ENCODE measurements at regions of chr15 and their contacts with region 1.

Region 1: DNA sequence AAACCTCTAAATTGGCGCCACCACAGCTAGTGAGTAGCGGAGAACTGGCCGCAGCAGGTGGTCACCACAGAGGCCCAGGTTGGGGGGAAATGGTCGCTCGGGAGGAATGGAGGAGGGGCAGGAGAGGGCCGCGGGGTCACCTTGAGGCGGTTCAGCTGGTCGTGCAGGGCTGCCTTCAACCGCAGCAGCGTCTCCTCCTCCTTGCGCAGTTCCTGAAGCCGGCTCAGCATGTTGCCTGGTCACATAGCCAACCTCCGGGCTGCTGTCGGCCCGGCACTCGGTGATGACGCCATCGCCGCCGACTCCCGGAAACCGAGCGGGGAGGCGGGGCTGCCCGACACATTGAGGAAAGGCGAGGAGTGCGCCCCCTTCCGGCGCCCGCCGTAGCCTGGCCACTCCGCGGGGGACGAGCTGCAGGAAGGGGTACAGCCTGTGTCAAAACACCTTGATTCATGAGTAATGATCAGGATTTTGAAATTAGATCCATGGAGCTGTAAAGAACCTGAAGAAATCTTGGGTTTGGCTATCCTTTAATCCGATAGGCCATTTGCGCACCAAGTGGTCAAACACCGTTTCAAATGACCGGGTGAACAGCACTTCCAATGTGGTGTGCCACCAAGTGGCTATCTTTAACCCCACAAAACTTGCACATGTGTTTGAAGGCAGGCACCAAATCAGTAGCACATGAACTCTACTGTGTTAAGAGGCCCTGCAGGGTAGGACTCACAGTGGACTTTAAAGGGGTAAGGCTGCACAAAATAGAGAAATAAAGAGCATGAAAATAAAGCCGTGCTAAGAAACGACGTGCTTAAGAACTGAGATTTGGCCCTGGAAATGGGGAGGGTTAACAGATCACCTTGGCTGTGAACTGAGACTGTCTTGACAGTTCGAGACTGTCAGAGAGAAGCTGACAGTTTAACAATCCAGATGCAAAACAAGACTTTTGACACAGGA is at the start of gene SNAPC5:
- DNase-seq: peak; percentile 94 to 99 (median 96)
- ATAC-seq: peak; percentile 97
- H3K4me3 ChIP-seq: peak within 1 kb of the TSS; percentile 80
- H3K4me3 Mint-ChIP-seq: peak within 1 kb of the TSS; percentile 89 to 98 (median 97)
- H3K27ac ChIP-seq: peak within 1 kb of the TSS; percentile 91
- H3K27ac Mint-ChIP-seq: peak within 1 kb of the TSS; percentile 94 to 99 (median 98)
- H3K4me1 ChIP-seq: peaks cover 18 to 28% of the 10 kb centered on the region in 2 donors
- H3K4me1 Mint-ChIP-seq: peaks cover 21 to 66% (median 49%) of the 10 kb centered on the region in 7 donors
- H3K27me3 ChIP-seq: no peaks in the 10 kb centered on the region
- H3K27me3 Mint-ChIP-seq: no peaks in the 10 kb centered on the region
- total RNA-seq, gene SNAPC5: 20.4 to 35.9 (median 25.0) TPM

Region 2: DNA sequence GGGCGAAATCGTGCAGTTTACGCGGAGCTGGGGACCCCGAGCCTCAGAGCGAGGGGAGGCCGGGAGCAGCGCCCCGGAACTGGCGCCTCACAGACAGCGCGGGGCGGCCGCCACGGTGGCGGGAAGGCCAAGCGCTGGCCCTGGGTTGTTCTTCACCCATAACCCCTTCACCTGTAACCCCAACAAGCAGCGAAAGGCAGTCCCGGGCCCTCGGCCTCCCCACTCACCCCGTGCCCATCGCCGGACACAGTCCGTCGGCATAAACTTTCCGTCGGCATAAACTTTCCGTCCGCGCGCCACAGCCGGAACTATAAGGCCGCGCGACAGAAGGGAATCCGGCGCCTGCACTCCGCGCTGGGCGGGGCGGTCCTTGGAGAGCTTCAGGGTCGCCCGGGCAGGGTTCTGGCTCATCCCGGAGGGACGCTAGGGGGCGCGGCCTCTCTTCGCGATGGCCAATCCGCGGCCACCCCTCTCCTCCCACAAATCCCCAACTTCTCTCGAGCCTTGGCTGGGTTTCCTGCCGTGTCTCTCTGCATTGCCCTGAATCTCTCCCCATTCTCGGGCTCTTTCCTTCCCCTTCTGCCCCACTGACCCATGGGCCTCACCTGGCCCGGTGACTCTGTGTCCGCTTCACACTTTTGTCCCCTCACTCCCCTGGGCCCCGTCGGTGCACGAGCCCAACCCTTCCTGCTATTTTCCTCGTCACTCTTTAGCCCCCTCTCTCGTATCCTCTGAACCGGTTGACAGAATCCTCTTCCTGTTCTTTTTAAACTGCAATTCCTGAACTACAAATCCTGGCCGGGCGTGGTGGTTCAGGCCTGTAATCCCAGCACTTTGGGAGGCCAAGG is 886.7 kb before region 1 on chr15 and contains the start of gene INTS14:
- CTCF ChIA-PET with region 1: no interaction called
- POLR2A ChIA-PET with region 1: no interaction called
- intact Hi-C with region 1: loop called in 1 of 2 experiments (anchors 1 kb)
- DNase-seq: peak; percentile 74 to 96 (median 80)
- ATAC-seq: peak; percentile 99
- H3K4me3 ChIP-seq: peak within 1 kb of the TSS; percentile 97
- H3K4me3 Mint-ChIP-seq: peak within 1 kb of the TSS; percentile 95 to 99 (median 98)
- H3K27ac ChIP-seq: peak within 1 kb of the TSS; percentile 89
- H3K27ac Mint-ChIP-seq: peak within 1 kb of the TSS; percentile 97 to 100 (median 98)
- H3K4me1 ChIP-seq: peaks cover 18 to 21% of the 10 kb centered on the region in 2 donors
- H3K4me1 Mint-ChIP-seq: peaks cover 11 to 44% (median 32%) of the 10 kb centered on the region in 7 donors
- H3K27me3 ChIP-seq: no peaks in the 10 kb centered on the region
- H3K27me3 Mint-ChIP-seq: no peaks in the 10 kb centered on the region
- total RNA-seq, gene INTS14: 19.1 to 38.3 (median 35.9) TPM

Region 3: GRCh38 chr15:66293419-66294156 is 204.2 kb before region 1 on chr15 and contains the start of gene DIS3L:
- CTCF ChIA-PET with region 1: interaction called, 9 read pairs
- POLR2A ChIA-PET with region 1: interaction called, 13 read pairs
- intact Hi-C with region 1: loop called (anchors 1 to 2 kb)
- DNase-seq: peak; percentile 55 to 80 (median 69)
- ATAC-seq: peak; percentile 85
- H3K4me3 ChIP-seq: peak within 1 kb of the TSS; percentile 69
- H3K4me3 Mint-ChIP-seq: peak within 1 kb of the TSS; percentile 82 to 93 (median 89)
- H3K27ac ChIP-seq: peak within 1 kb of the TSS; percentile 84
- H3K27ac Mint-ChIP-seq: peak within 1 kb of the TSS; percentile 86 to 97 (median 96)
- H3K4me1 ChIP-seq: peaks cover 13 to 31% of the 10 kb centered on the region in 2 donors
- H3K4me1 Mint-ChIP-seq: peaks cover 20 to 57% (median 48%) of the 10 kb centered on the region in 7 donors
- H3K27me3 ChIP-seq: no peaks in the 10 kb centered on the region
- H3K27me3 Mint-ChIP-seq: peaks cover 0 to 4% (median 0%) of the 10 kb centered on the region in 5 donors
- total RNA-seq, gene DIS3L: 34.3 to 40.2 (median 38.1) TPM

Region 4: GRCh38 chr15:66401130-66402021 is 96.4 kb before region 1 on chr15:
- CTCF ChIA-PET with region 1: interaction called, 20 read pairs
- POLR2A ChIA-PET with region 1: interaction called, 3 read pairs
- intact Hi-C with region 1: no loop called
- DNase-seq: peak in 5 of 9 donors; percentile 27 to 40 (median 33)
- ATAC-seq: peak; percentile 57
- H3K4me3 ChIP-seq: peak overlapping the region; percentile 37
- H3K4me3 Mint-ChIP-seq: peak overlapping the region; percentile 68 to 89 (median 82)
- H3K27ac ChIP-seq: peak overlapping the region; percentile 19
- H3K27ac Mint-ChIP-seq: peak overlapping the region; percentile 41 to 95 (median 80)
- H3K4me1 ChIP-seq: peaks cover 20 to 60% of the 10 kb centered on the region in 2 donors
- H3K4me1 Mint-ChIP-seq: peaks cover 46 to 87% (median 77%) of the 10 kb centered on the region in 7 donors
- H3K27me3 ChIP-seq: no peaks in the 10 kb centered on the region
- H3K27me3 Mint-ChIP-seq: no peaks in the 10 kb centered on the region

Region 5: GRCh38 chr15:66578286-66578875 is 80.6 kb after region 1 on chr15:
- CTCF ChIA-PET with region 1: no interaction called
- POLR2A ChIA-PET with region 1: no interaction called
- intact Hi-C with region 1: no loop called
- DNase-seq: no peak
- ATAC-seq: no peak
- H3K4me3 ChIP-seq: no peak overlapping the region
- H3K4me3 Mint-ChIP-seq: no peak overlapping the region
- H3K27ac ChIP-seq: no peak overlapping the region
- H3K27ac Mint-ChIP-seq: no peak overlapping the region
- H3K4me1 ChIP-seq: no peaks in the 10 kb centered on the region
- H3K4me1 Mint-ChIP-seq: peaks cover 0 to 13% (median 0%) of the 10 kb centered on the region in 7 donors
- H3K27me3 ChIP-seq: no peaks in the 10 kb centered on the region
- H3K27me3 Mint-ChIP-seq: peaks cover 0 to 3% (median 0%) of the 10 kb centered on the region in 5 donors

Region 6: GRCh38 chr15:66700802-66701421 is 203.1 kb after region 1 on chr15:
- CTCF ChIA-PET with region 1: interaction called, 3 read pairs
- POLR2A ChIA-PET with region 1: no interaction called
- intact Hi-C with region 1: loop called in 1 of 2 experiments (anchors 1 kb)
- DNase-seq: peak; percentile 66 to 91 (median 83)
- ATAC-seq: peak; percentile 92
- H3K4me3 ChIP-seq: peak overlapping the region; percentile 76
- H3K4me3 Mint-ChIP-seq: peak overlapping the region; percentile 87 to 95 (median 93)
- H3K27ac ChIP-seq: peak overlapping the region; percentile 66
- H3K27ac Mint-ChIP-seq: peak overlapping the region in 8 of 9 donors; percentile 18 to 92 (median 78)
- H3K4me1 ChIP-seq: peaks cover 6 to 13% of the 10 kb centered on the region in 2 donors
- H3K4me1 Mint-ChIP-seq: peaks cover 10 to 25% (median 19%) of the 10 kb centered on the region in 7 donors
- H3K27me3 ChIP-seq: peaks cover 5 to 7% of the 10 kb centered on the region in 2 donors
- H3K27me3 Mint-ChIP-seq: peaks cover 6 to 26% (median 17%) of the 10 kb centered on the region in 5 donors